Dorsolateral prefrontal cortex (tissue), 120 donors: ENCODE measurements at regions of chr11 and their contacts with region 1.

Region 1: GRCh38 chr11:77637345-77638165 is at the start of gene CLNS1A:
- DNase-seq: peak; percentile 89 to 95 (median 94)
- H3K4me3 ChIP-seq: peak within 1 kb of the TSS; percentile 61 to 100 (median 93)
- H3K27ac ChIP-seq: peak within 1 kb of the TSS in 57 of 59 donors; percentile 38 to 94 (median 82)
- H3K27me3 ChIP-seq: no peaks in the 10 kb centered on the region
- CTCF ChIP-seq: peak in 31 of 56 donors; percentile 5 to 54 (median 28)
- total RNA-seq, gene CLNS1A: 82.2 to 173 (median 107) TPM

Region 2: DNA sequence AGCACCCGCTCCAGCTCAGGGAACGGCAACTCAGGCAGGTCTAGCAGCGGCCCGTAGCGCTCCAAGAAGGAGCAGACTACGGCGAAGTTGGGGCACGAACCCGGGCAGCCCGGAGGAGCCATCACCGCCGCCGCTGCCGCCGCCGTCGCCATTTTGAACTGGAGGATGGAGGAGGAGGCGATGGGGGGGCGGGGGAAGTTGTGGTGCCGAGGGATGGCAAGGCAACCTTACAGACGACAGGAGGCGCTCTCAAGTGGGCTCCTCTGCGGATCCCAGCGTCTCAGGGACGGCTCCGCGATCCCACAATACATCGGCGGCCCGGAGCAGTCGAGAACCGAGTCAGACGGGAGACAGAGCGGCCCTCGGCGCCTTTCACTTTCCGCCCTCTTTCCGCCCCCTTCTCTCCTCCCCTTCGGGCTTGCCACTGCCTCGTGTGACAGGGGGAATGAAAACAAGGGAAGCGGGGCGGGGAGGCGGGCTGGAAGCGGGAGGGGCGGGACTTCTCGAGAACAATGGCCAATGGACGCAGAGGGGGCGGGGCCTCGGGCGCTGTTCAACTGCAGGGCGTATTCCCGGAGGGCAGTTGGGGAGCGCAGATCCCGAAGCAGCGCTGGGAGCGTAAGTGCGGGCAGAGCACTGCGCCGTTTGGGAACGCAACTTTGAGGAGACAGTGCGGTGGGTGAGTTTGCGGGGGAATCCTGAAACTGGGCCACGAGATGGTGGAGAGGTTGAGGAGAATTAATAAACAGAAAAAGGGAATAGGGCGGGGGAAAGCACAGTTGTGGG is 183.2 kb after region 1 on chr11 and contains the starts of genes AAMDC and RSF1:
- intact Hi-C with region 1: loop called (anchors 1 to 5 kb)
- DNase-seq: peak; percentile 96 to 99 (median 99)
- H3K4me3 ChIP-seq: peak within 1 kb of the TSS; percentile 73 to 100 (median 96)
- H3K27ac ChIP-seq: peak within 1 kb of the TSS; percentile 89 to 99 (median 98)
- H3K27me3 ChIP-seq: no peaks in the 10 kb centered on the region
- CTCF ChIP-seq: peak in 55 of 56 donors; percentile 57 to 92 (median 76)
- total RNA-seq, gene AAMDC: 5.4 to 28.0 (median 14.8) TPM
- total RNA-seq, gene RSF1: 75.5 to 116 (median 94.3) TPM

Region 3: GRCh38 chr11:78045851-78046485 is 408.4 kb after region 1 on chr11:
- intact Hi-C with region 1: no loop called
- DNase-seq: peak; percentile 75 to 92 (median 82)
- H3K4me3 ChIP-seq: peak overlapping the region; percentile 33 to 79 (median 67)
- H3K27ac ChIP-seq: peak overlapping the region in 58 of 59 donors; percentile 33 to 92 (median 84)
- H3K27me3 ChIP-seq: no peaks in the 10 kb centered on the region
- CTCF ChIP-seq: peak; percentile 82 to 100 (median 98)